Activated CD4-positive, alpha-beta T cell treated with anti-CD3 and anti-CD28 coated beads for 36 hours (primary cell): ENCODE measurements at regions of chr1 and their contacts with region 1.

Region 1: DNA sequence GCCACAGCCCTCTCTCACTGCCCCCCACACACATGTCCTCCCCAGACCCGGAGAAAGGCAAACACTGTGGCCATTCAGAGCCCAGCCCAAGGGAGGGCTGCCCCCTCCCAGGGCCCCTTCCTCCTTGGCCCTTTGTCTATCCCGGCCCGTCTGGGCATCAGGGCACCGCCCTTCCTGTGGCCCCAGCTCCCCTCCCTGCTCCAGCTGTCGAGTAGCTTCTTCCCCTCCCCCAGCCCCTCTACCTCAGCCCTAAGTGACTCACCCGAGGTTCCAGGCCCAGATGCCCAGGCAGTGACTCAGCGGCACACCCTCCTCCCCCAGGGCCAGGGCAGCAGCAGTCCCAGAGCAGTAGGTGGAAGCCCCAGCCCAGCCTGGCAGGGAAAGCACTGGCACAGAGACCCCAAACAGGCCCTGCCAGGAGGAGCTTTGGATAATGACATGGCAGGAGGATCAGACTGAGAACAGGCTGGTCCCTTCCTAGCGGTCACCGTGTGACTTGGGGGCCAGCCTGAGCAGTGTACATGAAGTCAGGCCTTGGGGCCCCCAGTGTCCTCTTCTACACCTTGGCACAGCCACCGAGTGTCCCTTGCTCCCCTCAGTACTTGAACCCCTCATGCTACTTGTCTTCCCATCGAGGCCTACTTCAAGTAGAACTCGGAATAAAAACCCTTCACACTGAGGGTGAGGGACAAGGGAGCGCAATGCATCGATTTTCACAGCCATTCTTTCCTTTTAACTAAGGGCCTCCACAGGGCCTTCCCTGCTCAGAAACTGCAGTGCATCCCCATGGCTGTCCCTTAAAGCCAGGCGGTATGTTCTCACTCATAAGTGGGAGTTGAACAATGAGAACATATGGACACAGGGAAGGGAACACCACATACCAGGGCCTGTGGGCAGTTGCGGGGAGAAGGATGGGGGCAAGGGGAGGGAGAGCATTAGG is 1.1 kb upstream of the S100A2 start:
- DNase-seq: peak; percentile 95
- ATAC-seq: peak; percentile 84
- H3K4me3 Mint-ChIP-seq: peak overlapping the region; percentile 71
- H3K27ac Mint-ChIP-seq: peak overlapping the region; percentile 100
- H3K4me1 Mint-ChIP-seq: peaks cover 52% of the 10 kb centered on the region
- H3K27me3 Mint-ChIP-seq: no peaks in the 10 kb centered on the region

Region 2: DNA sequence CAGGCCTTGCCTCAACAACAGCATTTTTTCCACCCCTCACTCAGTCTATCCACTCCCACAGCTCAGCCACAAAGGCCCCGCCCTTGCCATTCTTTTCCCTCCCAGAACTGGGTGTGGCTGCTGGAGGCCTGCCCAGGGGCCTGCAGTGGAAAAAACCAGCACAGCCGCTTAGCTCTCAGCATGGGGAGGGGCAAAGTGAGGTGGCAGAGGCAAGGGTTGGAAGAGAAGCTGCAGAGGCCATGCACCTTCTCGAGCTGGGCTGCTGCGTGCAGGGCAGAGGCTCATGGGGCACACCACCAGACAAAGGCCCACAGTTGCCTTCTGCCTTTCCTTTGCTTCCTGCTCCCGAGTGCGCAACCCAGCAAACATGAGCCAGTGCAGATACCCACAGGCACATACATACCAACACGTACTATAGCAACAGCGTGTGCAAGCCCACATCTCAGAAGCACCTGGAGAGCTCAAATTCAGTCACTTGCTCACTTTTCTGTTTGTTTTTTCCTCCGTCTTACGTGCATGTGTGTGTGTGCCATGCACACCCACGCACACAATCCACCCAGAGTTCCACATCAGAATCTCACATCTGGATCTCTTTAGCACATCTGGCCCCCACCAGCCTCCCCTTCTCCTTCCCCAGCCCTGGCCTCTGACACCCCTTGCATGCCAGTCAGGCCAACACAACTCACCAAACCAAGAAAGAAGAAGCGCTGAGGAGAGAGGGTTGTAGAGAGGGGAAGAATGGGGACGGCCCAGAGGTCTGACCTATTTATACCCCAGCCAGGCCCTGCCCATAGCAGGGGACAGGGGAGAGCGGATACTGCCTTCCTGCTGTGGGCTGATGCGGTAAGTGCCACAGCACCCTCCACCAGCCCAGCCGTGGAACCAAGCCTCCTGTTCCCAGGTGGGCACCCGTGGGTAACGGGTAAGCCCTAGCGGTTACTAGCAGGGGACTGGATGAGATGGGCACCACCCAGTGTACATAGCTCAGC is 21.3 kb before region 1 on chr1 and contains the start of gene S100A4:
- CTCF ChIA-PET with region 1: interaction called, 28 read pairs
- POLR2A ChIA-PET with region 1: interaction called, 5 read pairs
- intact Hi-C with region 1: loop called (anchors 1 kb)
- DNase-seq: peak; percentile 97
- ATAC-seq: peak; percentile 83
- H3K4me3 Mint-ChIP-seq: peak within 1 kb of the TSS; percentile 78
- H3K27ac Mint-ChIP-seq: peak within 1 kb of the TSS; percentile 96
- H3K4me1 Mint-ChIP-seq: peaks cover 70% of the 10 kb centered on the region
- H3K27me3 Mint-ChIP-seq: no peaks in the 10 kb centered on the region
- total RNA-seq, gene S100A4: 84.8 to 166 TPM

Region 3: DNA sequence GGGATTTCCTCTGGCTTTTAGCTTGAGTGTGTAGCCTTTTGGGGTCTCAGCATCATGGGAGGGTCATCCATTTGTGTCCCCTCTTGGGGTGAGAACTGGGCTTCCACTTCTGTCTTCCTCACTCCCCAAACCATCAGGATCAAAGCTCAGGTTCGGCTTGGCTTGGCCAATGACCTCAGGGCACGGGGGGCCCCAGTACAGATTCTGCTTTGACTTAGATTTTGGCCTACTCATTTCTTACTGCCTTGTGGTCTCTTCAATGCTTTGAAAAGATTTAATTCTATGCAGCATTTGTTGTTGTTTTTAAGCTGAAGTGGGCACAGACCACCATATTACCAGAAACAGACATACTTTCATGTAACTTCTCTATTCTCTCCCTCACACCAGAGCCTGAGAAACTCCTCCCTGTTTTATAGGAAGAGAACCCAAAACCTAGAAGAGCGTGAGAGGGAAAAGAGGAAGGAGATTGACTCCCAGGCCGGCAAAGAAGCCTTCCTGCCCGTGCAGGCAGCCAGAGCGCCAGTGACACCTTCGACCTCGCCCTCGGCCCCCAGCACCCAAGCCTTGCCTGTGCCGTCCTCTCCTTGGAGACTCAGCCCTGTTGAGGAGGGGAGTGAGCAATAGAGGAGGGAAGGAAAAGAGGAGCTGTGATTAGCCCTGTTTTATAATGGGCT is 15.7 kb before region 1 on chr1:
- CTCF ChIA-PET with region 1: interaction called, 28 read pairs
- POLR2A ChIA-PET with region 1: interaction called, 5 read pairs
- intact Hi-C with region 1: no loop called
- DNase-seq: no peak
- ATAC-seq: no peak
- H3K4me3 Mint-ChIP-seq: no peak overlapping the region
- H3K27ac Mint-ChIP-seq: no peak overlapping the region
- H3K4me1 Mint-ChIP-seq: peaks cover 14% of the 10 kb centered on the region
- H3K27me3 Mint-ChIP-seq: no peaks in the 10 kb centered on the region